Transverse colon (tissue), 4 donors: ENCODE measurements at regions of chr3 and their contacts with region 1.

Region 1: GRCh38 chr3:127672516-127673190 is at the start of gene ABTB1:
- DNase-seq: peak; percentile 90
- H3K4me3 ChIP-seq: peak within 1 kb of the TSS; percentile 83 to 98 (median 97)
- H3K27ac ChIP-seq: peak within 1 kb of the TSS; percentile 90 to 98 (median 92)
- H3K4me1 ChIP-seq: peaks cover 8 to 29% (median 23%) of the 10 kb centered on the region in 4 donors
- H3K27me3 ChIP-seq: no peaks in the 10 kb centered on the region
- CTCF ChIP-seq: no peak
- EP300 ChIP-seq: no peak
- POLR2A ChIP-seq: peak; percentile 90
- total RNA-seq, gene ABTB1: 29.6 to 80.4 (median 45.8) TPM

Region 2: DNA sequence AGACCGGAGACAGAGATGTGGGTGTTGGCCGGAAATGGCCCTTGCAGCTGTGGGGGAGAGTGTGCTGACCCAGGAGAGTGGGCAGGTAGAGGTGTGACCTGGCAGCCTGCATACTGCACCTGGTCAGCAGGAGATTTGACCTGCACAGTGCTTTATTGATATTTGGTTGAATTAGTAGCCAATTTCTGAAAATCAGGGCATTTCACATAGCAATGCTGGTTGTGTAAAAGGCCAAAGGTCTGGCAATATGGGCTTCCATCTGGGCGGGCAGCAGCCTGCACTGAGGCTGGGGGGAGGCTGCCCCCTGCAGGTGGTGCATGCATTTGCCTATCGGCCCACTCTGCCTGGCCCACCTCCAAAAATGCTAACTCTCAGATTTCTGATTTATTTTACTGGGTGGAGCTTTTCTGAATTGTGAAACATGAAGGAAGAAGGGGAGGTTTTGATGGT is 159.1 kb after region 1 on chr3:
- in situ Hi-C with region 1: loop called in 3 of 4 experiments (anchors 25 kb)
- intact Hi-C with region 1: no loop called
- DNase-seq: peak; percentile 74
- H3K4me3 ChIP-seq: no peak overlapping the region
- H3K27ac ChIP-seq: no peak overlapping the region
- H3K4me1 ChIP-seq: no peaks in the 10 kb centered on the region
- H3K27me3 ChIP-seq: no peaks in the 10 kb centered on the region
- CTCF ChIP-seq: peak; percentile 71 to 84 (median 80)
- EP300 ChIP-seq: no peak
- POLR2A ChIP-seq: no peak

Region 3: GRCh38 chr3:127970966-127971592 is 298.4 kb after region 1 on chr3:
- in situ Hi-C with region 1: loop called in 2 of 4 experiments (anchors 25 kb)
- intact Hi-C with region 1: no loop called
- DNase-seq: peak; percentile 29
- H3K4me3 ChIP-seq: no peak overlapping the region
- H3K27ac ChIP-seq: no peak overlapping the region
- H3K4me1 ChIP-seq: peaks cover 0 to 8% (median 0%) of the 10 kb centered on the region in 4 donors
- H3K27me3 ChIP-seq: peaks cover 11% of the 10 kb centered on the region
- CTCF ChIP-seq: peak; percentile 59 to 70 (median 70)
- EP300 ChIP-seq: no peak
- POLR2A ChIP-seq: no peak